ENCODE measurements at regions of chr4 and their contacts with region 1.

Region 1: GRCh38 chr4:76430519-76431388 is 4.3 kb upstream of the SHROOM3 start:
- DNase-seq: peak; percentile 60
- ATAC-seq: peak; percentile 72; the same call in 1 of the 2 replicates
- H3K4me3 ChIP-seq: no peak overlapping the region
- H3K27ac ChIP-seq: no peak overlapping the region
- H3K4me1 ChIP-seq: no peaks in the 10 kb centered on the region
- H3K27me3 ChIP-seq: peaks cover 21% of the 10 kb centered on the region
- CTCF ChIP-seq: peak; percentile 78
- POLR2A ChIP-seq: no peak
- RAD21 ChIP-seq: peak; percentile 76

Region 2: GRCh38 chr4:76492055-76492454 is 61.3 kb after region 1 on chr4:
- CTCF ChIA-PET with region 1: no interaction called
- POLR2A ChIA-PET with region 1: no interaction called
- dilution Hi-C with region 1: no loop called
- in situ Hi-C with region 1: no loop called
- intact Hi-C with region 1: no loop called
- DNase-seq: no peak
- ATAC-seq: no peak
- H3K4me3 ChIP-seq: no peak overlapping the region
- H3K27ac ChIP-seq: no peak overlapping the region
- H3K4me1 ChIP-seq: peaks cover 2% of the 10 kb centered on the region; the same call in 1 of the 2 replicates
- H3K27me3 ChIP-seq: peaks cover 16% of the 10 kb centered on the region
- CTCF ChIP-seq: no peak
- POLR2A ChIP-seq: no peak
- RAD21 ChIP-seq: no peak

Region 3: GRCh38 chr4:76504613-76505465 is 74.1 kb after region 1 on chr4:
- CTCF ChIA-PET with region 1: interaction called, 9 read pairs
- POLR2A ChIA-PET with region 1: no interaction called
- dilution Hi-C with region 1: no loop called
- in situ Hi-C with region 1: loop called (anchors 5 kb)
- intact Hi-C with region 1: loop called (anchors 1 kb)
- DNase-seq: peak; percentile 63
- ATAC-seq: peak; percentile 85
- H3K4me3 ChIP-seq: no peak overlapping the region
- H3K27ac ChIP-seq: no peak overlapping the region
- H3K4me1 ChIP-seq: no peaks in the 10 kb centered on the region
- H3K27me3 ChIP-seq: peaks cover 22% of the 10 kb centered on the region
- CTCF ChIP-seq: peak; percentile 69
- POLR2A ChIP-seq: no peak
- RAD21 ChIP-seq: peak; percentile 64

Region 4: DNA sequence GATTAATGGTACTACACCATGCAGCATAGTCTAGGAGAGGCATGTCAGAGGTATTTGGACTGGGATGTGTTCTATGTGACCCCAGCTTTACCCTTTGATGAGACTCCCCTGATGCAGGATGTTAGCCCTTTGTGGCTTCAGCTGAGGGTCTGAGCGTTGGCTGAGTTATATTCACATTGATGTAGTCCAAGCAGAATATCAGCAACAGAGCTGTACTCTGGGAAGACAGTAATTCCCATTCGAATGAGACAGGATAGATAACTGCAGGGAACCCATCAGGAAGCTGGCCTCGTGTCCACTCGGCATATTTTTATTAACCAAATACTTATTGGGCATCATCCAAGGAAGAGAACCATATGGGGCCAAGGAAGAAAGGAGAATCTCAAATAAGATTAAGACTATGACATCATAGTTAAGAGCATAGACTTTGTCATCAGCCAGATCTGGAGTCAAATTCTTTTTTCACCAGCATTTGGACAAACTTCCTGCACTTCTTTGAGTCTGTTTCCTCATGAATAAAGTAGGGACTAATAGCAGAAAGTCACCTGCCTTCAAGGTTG is 269.1 kb after region 1 on chr4:
- CTCF ChIA-PET with region 1: no interaction called
- POLR2A ChIA-PET with region 1: no interaction called
- dilution Hi-C with region 1: no loop called
- in situ Hi-C with region 1: no loop called
- intact Hi-C with region 1: no loop called
- DNase-seq: no peak
- ATAC-seq: no peak
- H3K4me3 ChIP-seq: no peak overlapping the region
- H3K27ac ChIP-seq: no peak overlapping the region
- H3K4me1 ChIP-seq: peaks cover 36% of the 10 kb centered on the region
- H3K27me3 ChIP-seq: no peaks in the 10 kb centered on the region
- CTCF ChIP-seq: no peak
- POLR2A ChIP-seq: no peak
- RAD21 ChIP-seq: no peak

Region 5: GRCh38 chr4:76748649-76749048 is 317.9 kb after region 1 on chr4:
- CTCF ChIA-PET with region 1: no interaction called
- POLR2A ChIA-PET with region 1: no interaction called
- dilution Hi-C with region 1: no loop called
- in situ Hi-C with region 1: no loop called
- intact Hi-C with region 1: loop called (anchors 5 kb)
- DNase-seq: peak; percentile 41
- ATAC-seq: no peak
- H3K4me3 ChIP-seq: no peak overlapping the region
- H3K27ac ChIP-seq: no peak overlapping the region
- H3K4me1 ChIP-seq: peaks cover 11% of the 10 kb centered on the region
- H3K27me3 ChIP-seq: no peaks in the 10 kb centered on the region
- CTCF ChIP-seq: peak; percentile 41
- POLR2A ChIP-seq: no peak
- RAD21 ChIP-seq: peak; percentile 64

Region 6: GRCh38 chr4:77044461-77045150 is 613.9 kb after region 1 on chr4:
- CTCF ChIA-PET with region 1: no interaction called
- POLR2A ChIA-PET with region 1: no interaction called
- dilution Hi-C with region 1: no loop called
- in situ Hi-C with region 1: loop called (anchors 10 kb)
- intact Hi-C with region 1: loop called (anchors 10 kb)
- DNase-seq: peak; percentile 80
- ATAC-seq: peak; percentile 36; the same call in 1 of the 2 replicates
- H3K4me3 ChIP-seq: no peak overlapping the region
- H3K27ac ChIP-seq: peak overlapping the region; percentile 12; the same call in 1 of the 2 replicates
- H3K4me1 ChIP-seq: peaks cover 10% of the 10 kb centered on the region
- H3K27me3 ChIP-seq: no peaks in the 10 kb centered on the region
- CTCF ChIP-seq: peak; percentile 64
- POLR2A ChIP-seq: no peak
- RAD21 ChIP-seq: peak; percentile 40